ENCODE measurements at regions of chr17 and their contacts with region 1.

Region 1: GRCh38 chr17:29699283-29699682 is 76.6 kb upstream of the CORO6 start:
- DNase-seq: no peak
- ATAC-seq: no peak
- H3K4me3 ChIP-seq: no peak overlapping the region
- H3K27ac ChIP-seq: no peak overlapping the region
- H3K4me1 ChIP-seq: no peaks in the 10 kb centered on the region
- H3K27me3 ChIP-seq: no peaks in the 10 kb centered on the region
- CTCF ChIP-seq: no peak
- EP300 ChIP-seq: no peak
- POLR2A ChIP-seq: no peak
- RAD21 ChIP-seq: no peak

Region 2: GRCh38 chr17:29495011-29495410 is 204.3 kb before region 1 on chr17:
- CTCF ChIA-PET with region 1: no interaction called
- POLR2A ChIA-PET with region 1: no interaction called
- in situ Hi-C with region 1: no loop called
- intact Hi-C with region 1: loop called (anchors 5 kb)
- DNase-seq: no peak
- ATAC-seq: no peak
- H3K4me3 ChIP-seq: no peak overlapping the region
- H3K27ac ChIP-seq: no peak overlapping the region
- H3K4me1 ChIP-seq: no peaks in the 10 kb centered on the region
- H3K27me3 ChIP-seq: no peaks in the 10 kb centered on the region
- CTCF ChIP-seq: no peak
- EP300 ChIP-seq: no peak
- POLR2A ChIP-seq: no peak
- RAD21 ChIP-seq: no peak

Region 3: GRCh38 chr17:29732613-29733012 is 33.3 kb after region 1 on chr17:
- CTCF ChIA-PET with region 1: no interaction called
- POLR2A ChIA-PET with region 1: no interaction called
- in situ Hi-C with region 1: no loop called
- intact Hi-C with region 1: loop called (anchors 5 kb)
- DNase-seq: no peak
- ATAC-seq: no peak
- H3K4me3 ChIP-seq: no peak overlapping the region
- H3K27ac ChIP-seq: no peak overlapping the region
- H3K4me1 ChIP-seq: peaks cover 38% of the 10 kb centered on the region
- H3K27me3 ChIP-seq: no peaks in the 10 kb centered on the region
- CTCF ChIP-seq: no peak
- EP300 ChIP-seq: no peak
- POLR2A ChIP-seq: no peak
- RAD21 ChIP-seq: no peak